ENCODE measurements at regions of chr1 and their contacts with region 1.

Region 1: DNA sequence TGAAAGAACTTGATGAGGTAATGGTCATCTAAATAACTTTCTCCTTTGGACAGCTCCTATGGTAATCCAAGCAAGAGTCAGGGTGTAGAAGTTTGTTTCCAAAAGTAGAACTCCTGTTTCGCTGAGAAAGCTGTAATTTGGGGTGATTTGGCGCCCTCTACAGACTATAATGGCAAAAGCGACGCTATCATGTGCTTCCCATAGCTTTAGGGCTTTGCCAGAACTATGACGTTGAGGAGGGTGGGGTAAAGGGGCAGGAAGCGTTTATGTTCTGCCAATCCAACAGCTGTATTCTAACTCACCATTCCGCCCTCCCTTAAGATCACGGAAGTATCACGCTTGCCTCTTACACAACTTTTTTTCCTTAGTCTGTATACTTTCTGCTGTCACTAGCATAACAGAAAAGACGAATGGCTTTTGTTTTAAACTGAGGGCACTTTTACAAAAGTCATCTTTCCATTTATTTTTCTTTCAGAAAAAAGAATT is at the start of gene FMO4:
- DNase-seq: peak; percentile 69 to 78
- H3K4me3 ChIP-seq: peak within 1 kb of the TSS in 3 of 4 experiments; percentile 6 to 56 (median 16); a peak in 4 of 8 replicates
- H3K27ac ChIP-seq: no peak within 1 kb of the TSS
- H3K4me1 ChIP-seq: peaks cover 0 to 3% (median 0%) of the 10 kb centered on the region in 4 experiments; a peak in 3 of 7 replicates
- H3K27me3 ChIP-seq: no peaks in the 10 kb centered on the region
- CTCF ChIP-seq: peak in 2 of 3 experiments; percentile 79 to 91; a peak in 3 of 4 replicates
- EP300 ChIP-seq: no peak
- POLR2A ChIP-seq: no peak
- RAD21 ChIP-seq: peak; percentile 89 to 91
- total RNA-seq, gene FMO4: 2.2 and 2.3 TPM in 2 replicates

Region 2: GRCh38 chr1:171188388-171189266 is 125.3 kb before region 1 on chr1:
- CTCF ChIA-PET with region 1: interaction called, 11 read pairs
- POLR2A ChIA-PET with region 1: no interaction called
- DNase-seq: peak in 1 of 2 experiments; percentile 63
- H3K4me3 ChIP-seq: no peak overlapping the region
- H3K27ac ChIP-seq: no peak overlapping the region
- H3K4me1 ChIP-seq: no peaks in the 10 kb centered on the region; a peak in 1 of 7 replicates
- H3K27me3 ChIP-seq: no peaks in the 10 kb centered on the region
- CTCF ChIP-seq: peak; percentile 31 to 80 (median 74)
- EP300 ChIP-seq: no peak
- POLR2A ChIP-seq: no peak
- RAD21 ChIP-seq: peak; percentile 69 to 75

Region 3: DNA sequence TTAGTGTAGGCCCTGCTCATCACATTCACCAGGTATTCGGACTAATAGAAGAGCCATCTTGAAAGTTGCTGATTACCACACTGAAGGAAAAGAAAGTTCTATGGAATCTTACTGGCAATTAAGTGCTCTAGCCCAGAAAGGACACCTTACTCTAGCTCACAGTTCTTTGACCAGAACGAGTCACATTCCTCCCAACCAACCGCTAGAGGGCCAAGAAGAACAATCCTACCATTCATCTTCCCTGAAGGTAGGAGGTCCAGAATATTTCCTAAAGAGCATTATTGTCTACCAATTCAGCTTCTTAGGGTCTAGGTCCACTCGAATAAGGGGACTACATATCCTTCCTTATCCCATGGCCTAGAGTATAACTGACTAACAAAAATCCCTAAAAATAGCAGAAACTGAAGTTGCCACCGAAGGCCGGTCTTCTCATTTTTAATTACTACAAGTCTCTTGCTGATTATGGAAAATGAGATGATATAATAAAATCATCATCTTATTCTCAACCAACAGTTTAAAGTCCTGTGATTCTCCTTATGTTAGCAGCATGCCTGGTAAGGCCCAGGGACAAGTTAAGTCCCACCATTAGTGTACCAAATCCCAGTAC is 68.3 kb before region 1 on chr1:
- CTCF ChIA-PET with region 1: interaction called, 78 read pairs
- POLR2A ChIA-PET with region 1: interaction called, 6 read pairs
- DNase-seq: no peak
- H3K4me3 ChIP-seq: no peak overlapping the region
- H3K27ac ChIP-seq: no peak overlapping the region
- H3K4me1 ChIP-seq: peaks cover 0 to 4% (median 0%) of the 10 kb centered on the region in 4 experiments; a peak in 2 of 7 replicates
- H3K27me3 ChIP-seq: no peaks in the 10 kb centered on the region; a peak in 1 of 7 replicates
- CTCF ChIP-seq: peak in 2 of 3 experiments; percentile 78 to 87; a peak in 3 of 4 replicates
- EP300 ChIP-seq: no peak
- POLR2A ChIP-seq: no peak
- RAD21 ChIP-seq: peak; percentile 55 to 72

Region 4: GRCh38 chr1:171295821-171296220 is 18.1 kb before region 1 on chr1:
- CTCF ChIA-PET with region 1: interaction called, 45 read pairs
- POLR2A ChIA-PET with region 1: interaction called, 20 read pairs
- DNase-seq: no peak
- H3K4me3 ChIP-seq: no peak overlapping the region
- H3K27ac ChIP-seq: no peak overlapping the region
- H3K4me1 ChIP-seq: peaks cover 5 to 30% (median 16%) of the 10 kb centered on the region in 4 experiments; a peak in 6 of 7 replicates
- H3K27me3 ChIP-seq: no peaks in the 10 kb centered on the region
- CTCF ChIP-seq: no peak
- EP300 ChIP-seq: no peak
- POLR2A ChIP-seq: no peak
- RAD21 ChIP-seq: no peak

Region 5: GRCh38 chr1:171403371-171403770 is 89.5 kb after region 1 on chr1:
- CTCF ChIA-PET with region 1: interaction called, 12 read pairs
- POLR2A ChIA-PET with region 1: no interaction called
- DNase-seq: no peak
- H3K4me3 ChIP-seq: no peak overlapping the region
- H3K27ac ChIP-seq: no peak overlapping the region
- H3K4me1 ChIP-seq: peaks cover 0 to 6% (median 5%) of the 10 kb centered on the region in 4 experiments; a peak in 4 of 7 replicates
- H3K27me3 ChIP-seq: no peaks in the 10 kb centered on the region
- CTCF ChIP-seq: no peak
- EP300 ChIP-seq: no peak
- POLR2A ChIP-seq: no peak
- RAD21 ChIP-seq: no peak

Region 6: GRCh38 chr1:171446386-171446785 is 132.5 kb after region 1 on chr1:
- CTCF ChIA-PET with region 1: no interaction called
- POLR2A ChIA-PET with region 1: no interaction called
- DNase-seq: no peak
- H3K4me3 ChIP-seq: no peak overlapping the region
- H3K27ac ChIP-seq: no peak overlapping the region
- H3K4me1 ChIP-seq: no peaks in the 10 kb centered on the region
- H3K27me3 ChIP-seq: no peaks in the 10 kb centered on the region
- CTCF ChIP-seq: no peak
- EP300 ChIP-seq: no peak
- POLR2A ChIP-seq: no peak
- RAD21 ChIP-seq: no peak

Measured in H1 (cell line).